Posterior vena cava (tissue), 2 donors: ENCODE measurements at regions of chrX and their contacts with region 1.

Region 1: GRCh38 chrX:31012509-31013025 is 59.3 kb downstream of the FTHL17 start:
- DNase-seq: no peak

Region 2: DNA sequence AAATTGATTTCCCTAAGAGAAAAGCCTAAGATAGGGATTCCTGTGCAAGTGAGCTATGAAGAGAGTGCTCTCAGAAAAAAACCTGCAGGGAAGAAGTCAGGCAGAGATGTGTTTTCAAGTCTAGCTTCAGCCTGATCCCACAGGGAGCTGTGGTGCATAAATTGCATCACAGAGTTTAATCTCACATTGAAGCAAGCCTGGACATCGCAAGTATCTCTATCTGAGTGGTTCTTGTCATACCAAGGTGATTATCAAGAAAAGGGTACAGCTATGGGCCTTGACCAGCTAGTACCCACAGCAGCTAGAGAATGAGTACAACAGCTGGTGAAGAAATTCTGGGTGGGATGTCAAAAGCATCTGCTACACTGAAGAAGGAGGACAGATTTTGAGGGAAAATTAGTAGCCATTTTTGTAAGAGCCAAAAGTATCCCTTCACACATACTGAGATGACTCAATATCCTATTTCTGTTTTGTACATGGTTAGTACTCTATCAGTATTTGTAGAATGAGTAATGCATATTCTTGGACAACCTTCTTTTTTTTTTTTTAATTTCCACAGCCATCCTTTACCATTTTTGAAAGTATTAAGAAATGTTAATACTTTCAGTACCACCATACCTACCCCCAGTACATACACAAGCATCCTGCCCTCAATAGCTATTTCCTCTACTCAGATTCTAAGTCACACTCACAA is 1716.4 kb before region 1 on chrX:
- intact Hi-C with region 1: no loop called
- DNase-seq: no peak

Region 3: GRCh38 chrX:31099536-31100090 is 87.0 kb after region 1 on chrX:
- intact Hi-C with region 1: no loop called
- DNase-seq: no peak

Region 4: GRCh38 chrX:31223817-31224216 is 211.2 kb after region 1 on chrX:
- intact Hi-C with region 1: loop called in 1 of 2 experiments (anchors 5 kb)
- DNase-seq: no peak